ENCODE measurements at regions of chr4 and their contacts with region 1.

Region 1: DNA sequence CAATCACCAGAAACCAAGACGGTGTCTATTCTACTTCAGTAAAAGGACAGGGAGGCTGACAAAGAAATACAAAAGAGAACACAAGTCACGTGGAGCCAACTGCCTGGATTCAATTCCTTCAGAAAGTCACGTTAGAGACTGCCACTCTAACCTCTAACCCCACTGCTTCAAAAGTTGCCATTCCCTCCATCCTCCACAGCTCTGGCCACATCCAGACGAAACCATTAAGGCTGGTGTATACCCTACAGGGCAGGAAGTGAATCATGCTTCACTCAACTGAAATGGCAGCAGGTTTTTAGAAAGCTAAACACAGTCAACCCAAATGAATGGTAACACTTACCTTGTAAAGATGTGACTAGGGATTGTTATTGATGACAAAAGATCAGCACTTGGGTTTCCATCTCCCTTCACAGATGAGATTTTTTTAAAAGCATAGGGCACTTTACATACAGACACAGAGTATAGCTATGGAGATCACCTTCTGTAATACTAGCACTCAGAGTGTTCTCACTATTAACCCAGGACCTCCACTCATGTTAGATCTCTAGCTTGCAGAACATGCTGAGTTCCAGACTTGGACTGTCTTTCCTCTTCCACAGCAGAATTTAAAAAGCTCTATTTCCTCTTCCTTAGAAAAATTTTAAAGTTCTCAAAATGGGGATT is 37.4 kb downstream of the MAML3 start:
- DNase-seq: peak; percentile 58
- ATAC-seq: peak; percentile 99
- H3K4me3 Mint-ChIP-seq: no peak overlapping the region
- H3K27ac Mint-ChIP-seq: peak overlapping the region; percentile 72
- H3K4me1 Mint-ChIP-seq: peaks cover 25% of the 10 kb centered on the region
- H3K27me3 Mint-ChIP-seq: no peaks in the 10 kb centered on the region

Region 2: GRCh38 chr4:139410312-139410711 is 706.3 kb before region 1 on chr4:
- CTCF ChIA-PET with region 1: no interaction called
- POLR2A ChIA-PET with region 1: no interaction called
- intact Hi-C with region 1: no loop called
- DNase-seq: no peak
- ATAC-seq: no peak
- H3K4me3 Mint-ChIP-seq: no peak overlapping the region
- H3K27ac Mint-ChIP-seq: no peak overlapping the region
- H3K4me1 Mint-ChIP-seq: no peaks in the 10 kb centered on the region
- H3K27me3 Mint-ChIP-seq: no peaks in the 10 kb centered on the region

Region 3: GRCh38 chr4:140103676-140104075 is 12.9 kb before region 1 on chr4:
- CTCF ChIA-PET with region 1: interaction called, 3 read pairs
- POLR2A ChIA-PET with region 1: no interaction called
- intact Hi-C with region 1: loop called in 1 of 2 experiments (anchors 1 kb)
- DNase-seq: peak; percentile 75
- ATAC-seq: peak; percentile 91
- H3K4me3 Mint-ChIP-seq: no peak overlapping the region
- H3K27ac Mint-ChIP-seq: peak overlapping the region; percentile 72
- H3K4me1 Mint-ChIP-seq: peaks cover 52% of the 10 kb centered on the region
- H3K27me3 Mint-ChIP-seq: peaks cover 8% of the 10 kb centered on the region

Region 4: GRCh38 chr4:140439644-140440142 is 323.1 kb after region 1 on chr4:
- CTCF ChIA-PET with region 1: no interaction called
- POLR2A ChIA-PET with region 1: no interaction called
- intact Hi-C with region 1: no loop called
- DNase-seq: no peak
- ATAC-seq: no peak
- H3K4me3 Mint-ChIP-seq: no peak overlapping the region
- H3K27ac Mint-ChIP-seq: no peak overlapping the region
- H3K4me1 Mint-ChIP-seq: no peaks in the 10 kb centered on the region
- H3K27me3 Mint-ChIP-seq: peaks cover 7% of the 10 kb centered on the region